H1 (cell line): ENCODE measurements at regions of chr2 and their contacts with region 1.

Region 1: DNA sequence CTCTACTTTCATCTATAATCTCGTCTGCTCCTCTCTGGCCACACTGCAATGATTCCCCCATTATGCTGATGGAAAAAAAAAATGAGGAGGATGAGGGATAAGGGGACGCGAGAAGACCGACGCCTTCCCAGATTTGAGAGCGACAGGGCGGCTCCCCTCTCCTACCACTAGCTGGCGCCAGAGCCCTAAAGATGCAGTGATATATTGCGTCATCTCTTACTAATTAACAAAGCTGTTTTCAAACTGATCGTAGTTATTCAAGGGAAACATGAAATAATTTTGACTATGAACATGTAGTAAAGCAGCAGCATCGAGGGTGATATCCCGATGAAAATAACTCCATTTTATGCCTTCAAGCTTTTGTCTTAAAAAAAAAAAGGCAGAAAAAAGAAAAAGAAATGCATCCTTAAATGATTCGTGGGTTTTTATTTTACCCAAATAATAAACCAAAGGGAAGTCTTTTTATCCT is 48.0 kb upstream of the HNRNPA3 start:
- DNase-seq: peak; percentile 56 to 89
- H3K4me3 ChIP-seq: peak overlapping the region in 1 of 4 experiments; percentile 24; a peak in 1 of 8 replicates
- H3K27ac ChIP-seq: no peak overlapping the region; the same call in 1 of the 2 replicates
- H3K4me1 ChIP-seq: peaks cover 0 to 10% (median 1%) of the 10 kb centered on the region in 4 experiments; a peak in 4 of 7 replicates
- H3K27me3 ChIP-seq: no peaks in the 10 kb centered on the region
- CTCF ChIP-seq: peak; percentile 92 to 98 (median 95)
- EP300 ChIP-seq: no peak
- POLR2A ChIP-seq: no peak
- RAD21 ChIP-seq: peak; percentile 99

Region 2: GRCh38 chr2:177124371-177124770 is 40.2 kb before region 1 on chr2:
- CTCF ChIA-PET with region 1: no interaction called
- POLR2A ChIA-PET with region 1: no interaction called
- DNase-seq: no peak
- H3K4me3 ChIP-seq: no peak overlapping the region
- H3K27ac ChIP-seq: no peak overlapping the region
- H3K4me1 ChIP-seq: peaks cover 0 to 3% (median under 1%) of the 10 kb centered on the region in 4 experiments; a peak in 1 of 7 replicates
- H3K27me3 ChIP-seq: no peaks in the 10 kb centered on the region
- CTCF ChIP-seq: no peak
- EP300 ChIP-seq: no peak
- POLR2A ChIP-seq: no peak
- RAD21 ChIP-seq: no peak

Region 3: GRCh38 chr2:177148477-177149154 is 16.0 kb before region 1 on chr2:
- CTCF ChIA-PET with region 1: interaction called, 25 read pairs
- POLR2A ChIA-PET with region 1: interaction called, 3 read pairs
- DNase-seq: peak; percentile 59 to 93
- H3K4me3 ChIP-seq: peak overlapping the region; percentile 14 to 60 (median 59); a peak in 7 of 8 replicates
- H3K27ac ChIP-seq: no peak overlapping the region
- H3K4me1 ChIP-seq: no peaks in the 10 kb centered on the region; a peak in 2 of 7 replicates
- H3K27me3 ChIP-seq: peaks cover 0 to 7% (median 1%) of the 10 kb centered on the region in 4 experiments; a peak in 3 of 7 replicates
- CTCF ChIP-seq: peak; percentile 89 to 90 (median 90)
- EP300 ChIP-seq: no peak
- POLR2A ChIP-seq: no peak
- RAD21 ChIP-seq: peak; percentile 73 to 82

Region 4: DNA sequence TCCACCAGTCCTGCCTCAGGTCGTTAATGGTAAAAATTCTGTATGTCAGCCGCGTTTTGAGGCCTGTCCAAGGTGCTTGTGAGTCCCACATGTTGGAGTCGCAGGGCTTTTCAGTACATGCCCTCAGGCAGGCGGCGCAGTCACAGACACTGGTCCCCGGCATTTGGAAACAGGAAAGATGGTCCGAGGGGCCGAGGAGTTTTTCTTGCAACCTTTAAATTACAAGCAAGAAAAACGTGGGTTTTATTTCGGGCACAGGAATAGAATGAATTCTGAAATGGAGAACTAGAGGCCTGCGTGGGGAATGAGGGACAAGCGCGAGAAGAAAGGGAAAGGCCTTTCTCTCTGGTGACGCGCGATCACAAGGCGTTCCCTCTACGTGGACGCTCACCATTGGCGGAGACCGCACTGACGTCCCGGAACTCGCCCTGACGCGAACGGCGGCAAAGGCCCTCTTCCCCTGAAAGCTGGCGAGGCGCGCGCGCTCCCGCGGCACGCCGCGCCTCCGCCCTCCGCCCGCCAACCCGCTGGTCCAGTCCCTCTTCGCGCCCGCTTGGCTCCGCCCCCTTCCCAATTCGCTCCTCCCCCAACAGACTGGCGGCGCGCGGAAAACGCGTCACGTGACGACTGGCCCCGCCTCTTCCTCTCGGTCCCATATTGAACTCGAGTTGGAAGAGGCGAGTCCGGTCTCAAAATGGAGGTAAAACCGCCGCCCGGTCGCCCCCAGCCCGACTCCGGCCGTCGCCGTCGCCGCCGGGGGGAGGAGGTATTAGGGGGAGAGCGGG is 47.7 kb after region 1 on chr2 and contains the start of gene HNRNPA3:
- CTCF ChIA-PET with region 1: interaction called, 8 read pairs
- POLR2A ChIA-PET with region 1: interaction called, 29 read pairs
- DNase-seq: peak; percentile 98 to 100
- H3K4me3 ChIP-seq: peak within 1 kb of the TSS; percentile 73 to 91 (median 79)
- H3K27ac ChIP-seq: peak within 1 kb of the TSS; percentile 99
- H3K4me1 ChIP-seq: peaks cover 2 to 5% (median 4%) of the 10 kb centered on the region in 4 experiments; a peak in 5 of 7 replicates
- H3K27me3 ChIP-seq: no peaks in the 10 kb centered on the region
- CTCF ChIP-seq: no peak
- EP300 ChIP-seq: no peak; a peak in 1 of 3 replicates
- POLR2A ChIP-seq: peak; percentile 70 to 97
- RAD21 ChIP-seq: no peak
- total RNA-seq, gene HNRNPA3: 390 and 408 TPM in 2 replicates

Region 5: DNA sequence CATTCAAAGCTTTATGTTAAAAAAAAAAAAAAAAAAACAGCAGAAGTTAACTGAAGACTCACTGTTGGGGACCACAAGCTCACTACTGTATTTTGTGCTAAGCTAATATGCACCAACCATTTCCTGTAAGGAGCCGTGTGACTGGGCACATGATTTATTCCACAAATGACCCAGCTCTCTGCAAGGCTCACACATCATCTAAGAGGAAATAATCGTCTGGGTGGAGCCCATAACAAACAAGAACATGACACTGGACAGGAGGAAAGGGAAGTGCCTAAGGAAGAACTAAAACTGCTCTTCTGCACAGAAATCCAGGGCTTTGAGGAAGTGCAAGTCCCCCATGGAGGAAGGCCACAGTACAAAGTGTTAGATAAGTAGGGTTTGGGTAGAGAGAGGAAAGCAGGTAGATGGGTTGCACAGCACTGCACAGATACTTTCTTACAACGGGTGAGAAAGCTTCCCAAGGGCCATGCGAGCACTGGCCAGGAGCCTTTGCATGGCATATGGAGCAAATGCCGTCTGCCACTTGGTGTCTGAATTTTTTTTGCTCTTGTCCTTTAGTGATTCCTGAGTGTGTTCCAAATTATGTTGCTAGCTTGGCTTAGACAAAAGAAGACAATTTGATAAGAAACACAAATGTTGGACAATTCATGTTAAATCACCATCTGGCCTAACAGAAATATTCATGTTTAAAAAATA is 75.5 kb after region 1 on chr2:
- CTCF ChIA-PET with region 1: interaction called, 10 read pairs
- POLR2A ChIA-PET with region 1: interaction called, 4 read pairs
- DNase-seq: no peak
- H3K4me3 ChIP-seq: no peak overlapping the region
- H3K27ac ChIP-seq: no peak overlapping the region
- H3K4me1 ChIP-seq: peaks cover 0 to 2% (median 0%) of the 10 kb centered on the region in 4 experiments; a peak in 3 of 7 replicates
- H3K27me3 ChIP-seq: no peaks in the 10 kb centered on the region
- CTCF ChIP-seq: no peak
- EP300 ChIP-seq: no peak
- POLR2A ChIP-seq: no peak
- RAD21 ChIP-seq: no peak

Region 6: GRCh38 chr2:177281400-177282180 is 117.0 kb after region 1 on chr2:
- CTCF ChIA-PET with region 1: interaction called, 24 read pairs
- POLR2A ChIA-PET with region 1: no interaction called
- DNase-seq: no peak
- H3K4me3 ChIP-seq: no peak overlapping the region; a peak in 1 of 8 replicates
- H3K27ac ChIP-seq: no peak overlapping the region
- H3K4me1 ChIP-seq: no peaks in the 10 kb centered on the region
- H3K27me3 ChIP-seq: no peaks in the 10 kb centered on the region
- CTCF ChIP-seq: no peak
- EP300 ChIP-seq: no peak
- POLR2A ChIP-seq: no peak
- RAD21 ChIP-seq: no peak

Region 7: GRCh38 chr2:177419274-177419673 is 254.7 kb after region 1 on chr2:
- CTCF ChIA-PET with region 1: interaction called, 12 read pairs
- POLR2A ChIA-PET with region 1: no interaction called
- DNase-seq: no peak
- H3K4me3 ChIP-seq: no peak overlapping the region
- H3K27ac ChIP-seq: no peak overlapping the region
- H3K4me1 ChIP-seq: no peaks in the 10 kb centered on the region
- H3K27me3 ChIP-seq: no peaks in the 10 kb centered on the region
- CTCF ChIP-seq: no peak
- EP300 ChIP-seq: no peak
- POLR2A ChIP-seq: no peak
- RAD21 ChIP-seq: no peak